ENCODE measurements at regions of chr9 and their contacts with region 1.

Region 1: GRCh38 chr9:9286001-9286400 is 1326.8 kb downstream of the PTPRD start:
- DNase-seq: no peak
- H3K4me3 ChIP-seq: no peak overlapping the region
- H3K27ac ChIP-seq: no peak overlapping the region
- H3K4me1 ChIP-seq: no peaks in the 10 kb centered on the region
- H3K27me3 ChIP-seq: no peaks in the 10 kb centered on the region
- CTCF ChIP-seq: no peak

Region 2: DNA sequence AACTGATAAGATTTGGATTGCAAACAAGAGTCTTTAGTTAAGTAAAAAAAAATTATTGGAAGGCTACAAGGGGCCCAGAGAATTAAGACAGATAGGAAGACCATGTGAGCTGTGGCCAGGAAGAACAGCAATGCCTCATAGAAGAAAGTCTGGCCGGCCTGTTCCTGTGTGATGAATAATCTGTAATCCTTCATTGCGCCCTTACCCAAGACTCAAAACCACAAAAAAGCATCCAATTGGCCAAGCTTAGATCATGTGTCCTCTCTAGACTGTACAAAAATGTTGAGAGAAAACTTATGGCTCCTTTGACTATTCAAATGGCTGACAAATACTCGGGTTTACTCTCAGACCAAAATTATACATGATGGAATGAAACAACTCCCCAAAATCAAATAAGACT is 56.7 kb before region 1 on chr9:
- CTCF ChIA-PET with region 1: no interaction called
- POLR2A ChIA-PET with region 1: no interaction called
- intact Hi-C with region 1: loop called (anchors 10 kb)
- DNase-seq: no peak
- H3K4me3 ChIP-seq: no peak overlapping the region
- H3K27ac ChIP-seq: no peak overlapping the region
- H3K4me1 ChIP-seq: no peaks in the 10 kb centered on the region
- H3K27me3 ChIP-seq: no peaks in the 10 kb centered on the region
- CTCF ChIP-seq: no peak

Measured in A673 (cell line).